ENCODE measurements at regions of chr12 and their contacts with region 1.

Region 1: DNA sequence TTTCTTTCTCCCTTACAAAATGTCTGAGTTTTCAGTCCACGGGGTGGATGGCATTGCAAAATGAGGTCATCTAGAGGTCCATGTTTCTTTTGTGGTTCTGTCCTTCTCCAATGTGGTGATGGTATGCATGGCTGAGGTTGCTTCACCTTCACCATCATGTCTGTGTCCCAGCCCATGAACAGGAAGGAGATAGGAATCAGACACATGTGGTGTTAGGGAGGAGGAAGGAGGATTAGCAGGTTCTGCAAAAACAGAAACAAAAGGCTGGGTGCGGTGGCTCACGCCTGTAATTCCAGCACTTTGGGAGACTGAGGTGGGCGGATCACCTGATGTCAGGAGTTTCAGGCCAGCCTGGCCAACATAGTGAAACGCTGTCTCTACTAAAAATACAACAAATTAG is 11.0 kb upstream of the AEBP2 start:
- DNase-seq: no peak
- H3K4me3 ChIP-seq: no peak overlapping the region
- H3K27ac ChIP-seq: no peak overlapping the region
- H3K4me1 ChIP-seq: no peaks in the 10 kb centered on the region
- CTCF ChIP-seq: no peak

Region 2: DNA sequence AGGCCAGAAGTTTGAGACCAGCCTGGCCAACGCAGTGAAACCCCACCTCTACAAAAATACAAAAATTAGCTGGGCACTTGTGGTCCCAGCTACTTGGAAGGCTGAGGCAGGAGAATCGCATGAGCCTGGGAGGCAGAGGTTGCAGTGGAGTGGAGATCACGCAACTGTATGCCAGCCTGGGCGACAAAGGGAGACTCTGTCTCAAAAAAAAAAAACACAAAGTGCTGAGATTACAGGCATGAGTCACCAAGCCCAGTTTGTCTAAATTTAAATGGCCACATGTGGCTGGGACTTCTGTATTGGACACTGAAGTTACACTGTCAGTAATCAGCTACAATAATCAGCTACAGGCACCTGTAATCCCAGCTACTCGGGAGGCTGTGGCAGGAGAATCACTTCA is 89.9 kb before region 1 on chr12:
- CTCF ChIA-PET with region 1: no interaction called
- POLR2A ChIA-PET with region 1: no interaction called
- intact Hi-C with region 1: no loop called
- DNase-seq: no peak
- H3K4me3 ChIP-seq: no peak overlapping the region
- H3K27ac ChIP-seq: no peak overlapping the region
- H3K4me1 ChIP-seq: no peaks in the 10 kb centered on the region
- CTCF ChIP-seq: no peak

Region 3: GRCh38 chr12:19382111-19382526 is 46.1 kb before region 1 on chr12:
- CTCF ChIA-PET with region 1: no interaction called
- POLR2A ChIA-PET with region 1: no interaction called
- intact Hi-C with region 1: no loop called
- DNase-seq: no peak
- H3K4me3 ChIP-seq: no peak overlapping the region
- H3K27ac ChIP-seq: no peak overlapping the region
- H3K4me1 ChIP-seq: no peaks in the 10 kb centered on the region
- CTCF ChIP-seq: no peak

Region 4: DNA sequence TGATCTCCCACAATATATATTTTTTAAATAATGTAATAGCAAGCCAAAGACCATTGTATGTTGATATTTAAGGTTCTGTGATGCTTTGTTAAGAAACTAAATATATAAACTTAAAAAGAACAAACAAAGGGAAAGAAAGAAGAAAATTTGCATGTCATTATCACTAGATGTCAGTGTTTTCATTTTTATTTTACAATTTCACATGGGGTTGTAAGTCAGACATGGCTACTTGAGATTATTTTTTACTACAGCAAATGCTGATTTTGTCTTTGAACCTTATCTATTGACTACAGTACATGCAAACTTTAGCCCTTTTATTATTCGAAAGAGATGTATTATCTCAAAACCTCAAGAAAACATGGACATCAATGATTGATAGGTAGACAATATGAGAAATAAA is 1303.0 kb after region 1 on chr12:
- CTCF ChIA-PET with region 1: no interaction called
- POLR2A ChIA-PET with region 1: interaction called, 10 read pairs
- intact Hi-C with region 1: no loop called
- DNase-seq: no peak
- H3K4me3 ChIP-seq: no peak overlapping the region
- H3K27ac ChIP-seq: no peak overlapping the region
- H3K4me1 ChIP-seq: no peaks in the 10 kb centered on the region
- CTCF ChIP-seq: no peak